GM12878 (cell line): ENCODE measurements at regions of chr7 and their contacts with region 1.

Region 1: DNA sequence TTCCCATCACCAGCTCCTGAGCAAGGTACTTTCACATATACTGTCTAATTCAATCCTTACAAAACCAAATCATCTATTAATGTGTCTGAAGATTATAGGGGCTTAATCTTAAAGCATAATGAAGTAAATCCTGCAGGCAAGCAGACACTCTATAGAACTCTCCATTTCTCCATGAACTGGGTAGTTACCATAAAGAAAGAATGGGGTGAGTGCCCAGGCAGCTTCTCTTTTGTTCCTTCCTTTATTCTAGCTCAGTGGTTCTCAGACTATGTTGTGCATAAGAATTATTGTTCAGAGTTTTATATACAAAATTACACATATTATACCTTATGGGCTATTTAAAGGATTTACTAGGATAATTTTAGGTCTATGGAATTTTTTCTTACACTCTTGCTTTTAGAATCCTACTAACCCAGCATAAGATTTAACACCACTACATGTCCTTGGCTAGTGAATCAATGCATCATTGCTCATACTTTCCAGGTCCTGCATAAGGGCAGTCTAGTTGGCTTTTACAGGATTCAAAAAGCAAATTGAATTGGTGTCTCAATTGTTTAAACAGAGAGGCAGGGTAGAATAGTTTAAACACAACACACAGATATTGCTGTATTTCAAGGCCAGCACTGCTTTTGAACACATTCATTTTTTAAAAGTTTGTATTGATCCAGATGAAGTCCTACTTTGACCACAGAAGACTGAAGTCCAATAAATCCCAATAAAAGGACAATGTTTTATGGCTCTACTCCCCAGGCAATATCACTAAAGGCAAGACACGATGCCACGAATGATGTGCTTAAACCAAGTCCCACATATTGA is 12.9 kb downstream of the SGCE start:
- DNase-seq: no peak
- ATAC-seq: no peak
- H3K4me3 ChIP-seq: no peak overlapping the region
- H3K27ac ChIP-seq: no peak overlapping the region
- H3K4me1 ChIP-seq: no peaks in the 10 kb centered on the region
- H3K27me3 ChIP-seq: no peaks in the 10 kb centered on the region
- CTCF ChIP-seq: no peak
- EP300 ChIP-seq: no peak
- POLR2A ChIP-seq: no peak
- RAD21 ChIP-seq: no peak

Region 2: GRCh38 chr7:94632338-94633013 is 10.6 kb before region 1 on chr7:
- CTCF ChIA-PET with region 1: interaction called, 4 read pairs
- POLR2A ChIA-PET with region 1: interaction called, 4 read pairs
- RAD21 ChIA-PET with region 1: interaction called, 10 read pairs
- SMC1A ChIA-PET with region 1: interaction called, 4 read pairs
- in situ Hi-C with region 1: no loop called
- intact Hi-C with region 1: no loop called
- DNase-seq: no peak
- ATAC-seq: peak; percentile 84
- H3K4me3 ChIP-seq: no peak overlapping the region
- H3K27ac ChIP-seq: no peak overlapping the region
- H3K4me1 ChIP-seq: no peaks in the 10 kb centered on the region
- H3K27me3 ChIP-seq: no peaks in the 10 kb centered on the region
- CTCF ChIP-seq: no peak
- EP300 ChIP-seq: no peak
- POLR2A ChIP-seq: no peak
- RAD21 ChIP-seq: no peak

Region 3: DNA sequence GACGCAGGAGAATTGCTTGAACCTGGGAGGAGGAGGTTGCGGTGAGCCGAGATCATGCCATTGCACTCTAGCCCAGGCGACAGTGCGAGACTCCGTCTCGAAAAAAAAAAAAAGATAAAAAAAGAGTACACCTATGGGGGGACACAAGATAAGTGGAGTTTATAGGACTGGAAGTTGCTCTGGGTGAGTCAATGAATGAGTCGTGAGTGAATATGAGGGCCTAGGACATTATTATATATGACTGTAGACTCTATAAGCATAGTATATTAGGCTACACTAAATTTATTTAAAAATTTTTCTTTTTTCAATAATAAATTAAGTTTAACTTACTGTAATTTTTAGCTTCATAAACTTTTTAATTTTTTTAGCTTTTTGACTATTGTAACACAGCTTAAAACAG is 32.3 kb after region 1 on chr7:
- CTCF ChIA-PET with region 1: no interaction called
- POLR2A ChIA-PET with region 1: no interaction called
- RAD21 ChIA-PET with region 1: no interaction called
- SMC1A ChIA-PET with region 1: no interaction called
- in situ Hi-C with region 1: no loop called
- intact Hi-C with region 1: no loop called
- DNase-seq: no peak
- ATAC-seq: no peak
- H3K4me3 ChIP-seq: no peak overlapping the region
- H3K27ac ChIP-seq: no peak overlapping the region
- H3K4me1 ChIP-seq: no peaks in the 10 kb centered on the region
- H3K27me3 ChIP-seq: no peaks in the 10 kb centered on the region
- CTCF ChIP-seq: no peak
- EP300 ChIP-seq: no peak
- POLR2A ChIP-seq: no peak
- RAD21 ChIP-seq: no peak